ENCODE measurements at regions of chr1 and their contacts with region 1.

Region 1: GRCh38 chr1:101532377-101532776 is 295.6 kb downstream of the S1PR1 start:
- DNase-seq: no peak
- H3K4me3 ChIP-seq: no peak overlapping the region
- H3K27ac ChIP-seq: no peak overlapping the region
- H3K4me1 ChIP-seq: no peaks in the 10 kb centered on the region
- H3K27me3 ChIP-seq: no peaks in the 10 kb centered on the region
- CTCF ChIP-seq: no peak

Region 2: GRCh38 chr1:101484689-101485338 is 47.6 kb before region 1 on chr1:
- CTCF ChIA-PET with region 1: no interaction called
- POLR2A ChIA-PET with region 1: no interaction called
- intact Hi-C with region 1: no loop called
- DNase-seq: no peak
- H3K4me3 ChIP-seq: no peak overlapping the region
- H3K27ac ChIP-seq: no peak overlapping the region
- H3K4me1 ChIP-seq: no peaks in the 10 kb centered on the region
- H3K27me3 ChIP-seq: no peaks in the 10 kb centered on the region
- CTCF ChIP-seq: no peak

Region 3: DNA sequence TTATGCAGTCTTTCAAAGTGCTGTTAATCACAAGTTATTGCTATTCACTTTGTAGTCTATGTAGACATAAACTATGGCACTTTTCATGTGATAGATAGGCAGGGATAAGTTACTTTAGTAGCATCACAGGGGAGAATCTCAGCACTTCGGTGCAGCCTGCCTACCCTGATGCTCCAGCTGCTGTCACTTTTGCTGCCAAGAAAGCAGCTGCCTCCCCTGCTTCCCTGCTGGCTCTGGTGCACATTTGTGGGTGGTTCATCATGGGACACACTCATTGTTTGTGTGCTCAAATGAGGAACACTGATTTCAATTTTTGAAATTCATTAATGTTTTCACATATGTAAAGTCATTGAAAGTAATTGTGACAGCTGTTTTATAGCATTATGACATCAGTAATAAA is 23.0 kb before region 1 on chr1:
- CTCF ChIA-PET with region 1: no interaction called
- POLR2A ChIA-PET with region 1: interaction called, 14 read pairs
- intact Hi-C with region 1: no loop called
- DNase-seq: no peak
- H3K4me3 ChIP-seq: no peak overlapping the region
- H3K27ac ChIP-seq: no peak overlapping the region
- H3K4me1 ChIP-seq: no peaks in the 10 kb centered on the region
- H3K27me3 ChIP-seq: no peaks in the 10 kb centered on the region
- CTCF ChIP-seq: no peak